ENCODE measurements at regions of chr12 and their contacts with region 1.

Region 1: DNA sequence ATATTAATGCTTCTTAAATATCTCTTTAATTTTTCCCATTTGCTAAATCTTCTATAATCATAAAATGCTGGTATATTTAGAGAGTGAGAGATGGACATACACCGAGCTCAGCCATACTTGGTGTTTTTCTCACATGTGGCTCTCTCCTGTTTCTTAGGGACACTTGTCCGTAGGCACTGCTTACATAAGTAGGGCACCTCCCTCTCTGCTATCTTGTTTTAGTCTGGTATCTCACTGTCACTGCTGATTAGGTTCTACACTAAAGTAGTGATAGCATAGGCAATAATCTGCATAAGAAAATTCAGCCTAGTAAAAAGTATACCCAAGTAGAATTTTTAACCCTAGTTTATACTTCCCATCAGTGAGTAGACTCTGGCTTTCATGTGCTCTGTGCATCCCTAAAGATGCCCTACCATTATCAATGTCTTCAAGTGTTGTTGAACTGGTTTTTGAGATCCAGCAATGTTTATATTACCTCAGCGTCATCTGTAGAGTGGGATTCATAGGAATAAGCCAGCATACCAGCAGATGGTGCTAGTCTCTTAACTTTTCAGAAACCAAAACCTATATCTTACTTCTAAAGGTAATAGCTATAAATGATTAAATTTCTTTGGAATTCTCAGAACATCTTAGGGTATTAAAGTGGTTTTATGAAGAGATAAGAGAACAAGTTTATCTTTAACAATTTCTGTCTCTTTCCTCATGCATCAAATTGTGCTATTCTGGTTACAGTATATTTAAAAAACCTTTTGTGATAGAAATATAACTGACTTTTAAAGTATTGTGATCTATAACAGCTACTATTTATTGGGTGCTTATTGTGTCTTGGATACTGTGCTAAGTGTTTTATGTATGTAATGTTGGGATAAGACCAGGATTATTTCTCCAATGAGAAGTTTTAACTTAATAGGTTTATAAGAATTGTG is 32.9 kb downstream of the ARID2 start:
- H3K4me3 Mint-ChIP-seq: no peak overlapping the region
- H3K27ac Mint-ChIP-seq: no peak overlapping the region
- H3K4me1 Mint-ChIP-seq: peaks cover 18% of the 10 kb centered on the region
- H3K27me3 Mint-ChIP-seq: no peaks in the 10 kb centered on the region

Region 2: GRCh38 chr12:46005151-46005797 is 242.8 kb after region 1 on chr12:
- intact Hi-C with region 1: loop called (anchors 10 kb)
- H3K4me3 Mint-ChIP-seq: no peak overlapping the region
- H3K27ac Mint-ChIP-seq: no peak overlapping the region
- H3K4me1 Mint-ChIP-seq: no peaks in the 10 kb centered on the region
- H3K27me3 Mint-ChIP-seq: peaks cover 1% of the 10 kb centered on the region